Mucosa of descending colon (tissue), 3 donors: ENCODE measurements at regions of chr1 and their contacts with region 1.

Region 1: DNA sequence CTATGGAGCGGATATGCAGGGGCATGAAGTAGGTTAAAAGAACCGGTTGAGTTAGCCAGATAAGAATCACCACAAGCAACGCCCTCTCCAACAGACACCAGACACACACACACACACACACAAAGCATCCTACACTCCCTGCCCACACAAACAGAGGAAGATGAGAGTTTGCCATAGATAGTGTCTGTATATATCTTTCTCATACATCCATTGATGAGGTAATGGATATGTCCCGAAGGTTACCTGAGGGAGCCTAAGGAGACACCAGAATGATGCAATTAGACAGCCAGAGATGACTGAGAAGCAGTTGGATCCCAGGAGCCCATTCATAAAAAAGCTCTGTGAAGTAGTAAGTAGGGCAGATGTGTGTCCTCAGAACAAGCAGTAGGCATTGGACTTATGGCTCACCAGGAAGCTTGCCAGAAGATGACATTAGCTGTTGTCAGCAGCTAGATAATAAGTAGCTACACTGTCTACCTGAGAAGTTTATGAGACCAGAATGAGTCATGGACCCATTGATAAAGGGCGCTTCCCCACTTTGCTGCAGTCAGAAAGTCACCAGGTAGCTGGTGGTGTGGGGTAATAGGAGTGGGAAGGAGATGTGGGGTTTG is 247.0 kb downstream of the KCNT2 start:
- DNase-seq: no peak
- ATAC-seq: no peak
- H3K4me3 ChIP-seq: no peak overlapping the region
- H3K4me1 ChIP-seq: no peaks in the 10 kb centered on the region
- CTCF ChIP-seq: no peak

Region 2: DNA sequence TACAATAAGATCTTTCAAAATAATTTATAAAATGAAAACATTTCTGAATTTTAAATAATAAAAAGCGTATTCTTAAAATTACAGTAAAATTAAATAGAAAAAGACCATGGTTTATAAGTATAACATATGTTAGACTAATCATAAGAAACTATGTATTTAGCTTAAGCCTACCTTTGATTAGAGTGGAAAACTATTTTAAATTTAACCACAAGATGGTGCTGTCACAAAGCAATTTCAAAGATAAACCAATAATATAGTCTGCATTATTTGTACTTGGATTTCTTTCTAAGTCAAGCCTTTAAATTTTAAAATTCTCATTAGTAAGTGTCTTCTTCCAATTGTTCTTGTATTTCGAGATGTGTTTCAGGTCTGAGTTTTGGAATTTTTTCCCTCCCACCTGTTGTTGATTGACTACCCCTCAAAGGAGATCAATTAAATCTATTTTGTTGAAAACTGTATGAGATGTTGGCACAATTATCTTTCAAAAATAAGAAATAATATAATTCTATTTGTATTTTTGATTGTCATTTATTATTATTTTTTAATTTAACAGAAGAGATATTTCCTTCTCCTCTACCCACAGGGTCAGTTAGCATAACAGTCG is 212.7 kb before region 1 on chr1:
- intact Hi-C with region 1: no loop called
- DNase-seq: no peak
- ATAC-seq: no peak
- H3K4me3 ChIP-seq: no peak overlapping the region
- H3K4me1 ChIP-seq: no peaks in the 10 kb centered on the region
- CTCF ChIP-seq: no peak

Region 3: DNA sequence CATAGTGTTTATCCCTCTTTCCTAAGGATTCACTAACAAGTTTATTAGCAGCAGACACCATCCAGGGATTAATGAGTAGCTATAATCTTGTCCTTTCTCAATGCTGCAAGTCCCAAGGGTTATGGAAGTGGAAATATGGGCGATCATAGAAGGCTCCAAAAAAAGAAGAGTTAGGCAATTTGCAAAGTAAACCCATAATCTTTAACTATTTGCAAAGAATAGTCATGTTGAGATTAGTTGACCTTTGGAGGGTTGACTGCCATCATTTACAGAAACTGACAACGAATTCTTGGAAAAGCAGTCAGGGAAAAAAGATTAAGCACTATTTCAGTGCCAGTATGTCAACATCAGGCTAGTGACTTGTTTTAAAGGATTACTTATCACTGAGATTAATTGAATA is 77.1 kb after region 1 on chr1:
- intact Hi-C with region 1: no loop called
- DNase-seq: no peak
- ATAC-seq: no peak
- H3K4me3 ChIP-seq: no peak overlapping the region
- H3K4me1 ChIP-seq: no peaks in the 10 kb centered on the region
- CTCF ChIP-seq: no peak

Region 4: DNA sequence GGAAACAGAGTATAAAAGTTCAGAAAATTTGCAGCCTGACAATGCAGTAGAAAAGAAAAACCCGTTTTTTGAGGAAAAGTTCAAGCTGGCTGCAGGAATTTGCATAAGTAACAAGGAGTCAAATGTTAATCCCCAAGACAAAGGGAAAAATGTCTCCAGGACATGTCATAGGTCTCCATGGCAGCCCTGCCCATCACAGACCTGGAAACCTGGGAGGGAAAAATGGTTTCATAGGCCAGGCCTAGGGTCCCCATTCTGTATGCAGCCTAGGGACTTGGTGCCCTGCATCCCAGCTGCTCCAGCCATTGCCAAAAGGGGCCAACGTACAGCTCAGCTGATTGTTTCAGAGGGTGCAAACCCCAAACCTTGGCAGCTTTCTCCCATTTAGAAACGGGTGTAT is 250.7 kb after region 1 on chr1:
- intact Hi-C with region 1: no loop called
- DNase-seq: no peak
- ATAC-seq: no peak
- H3K4me3 ChIP-seq: no peak overlapping the region
- H3K4me1 ChIP-seq: no peaks in the 10 kb centered on the region
- CTCF ChIP-seq: no peak

Region 5: DNA sequence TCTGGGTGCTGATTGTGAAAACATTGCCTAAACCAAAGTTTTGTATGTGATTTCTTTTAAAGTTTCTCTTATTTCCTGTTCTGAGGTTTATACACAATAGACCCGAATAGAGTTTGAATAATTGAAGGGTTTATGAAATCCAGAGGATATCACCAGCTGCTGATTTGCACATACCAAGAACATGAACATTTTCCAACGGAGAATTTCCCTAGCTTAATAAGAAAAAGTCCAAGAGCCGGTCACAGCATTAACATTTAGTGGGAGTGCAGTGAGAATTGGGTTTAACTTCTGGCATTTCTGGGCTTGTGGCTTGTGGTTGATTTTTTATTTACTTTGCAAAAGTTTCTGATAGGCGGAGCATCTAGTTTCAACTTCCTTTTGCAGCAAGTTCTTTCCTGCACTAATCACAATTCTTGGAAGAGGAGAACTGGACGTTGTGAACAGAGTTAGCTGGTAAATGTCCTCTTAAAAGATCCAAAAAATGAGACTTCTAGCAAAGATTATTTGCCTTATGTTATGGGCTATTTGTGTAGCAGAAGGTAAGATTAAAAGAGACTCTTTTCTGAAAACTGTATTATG is 290.5 kb after region 1 on chr1 and contains the start of gene CFH:
- intact Hi-C with region 1: loop called in 1 of 2 experiments (anchors 10 kb)
- DNase-seq: peak in 1 of 3 donors; percentile 14
- ATAC-seq: peak; percentile 34
- H3K4me3 ChIP-seq: no peak within 1 kb of the TSS
- H3K4me1 ChIP-seq: no peaks in the 10 kb centered on the region
- CTCF ChIP-seq: no peak
- total RNA-seq, gene CFH: 12.7 to 37.0 (median 24.5) TPM